MCF 10A (cell line): ENCODE measurements at regions of chr15 and their contacts with region 1.

Region 1: GRCh38 chr15:87267798-87268197 is 988.7 kb downstream of the NTRK3 start:
- DNase-seq: peak; percentile 69
- H3K4me3 Mint-ChIP-seq: no peak overlapping the region
- H3K27ac Mint-ChIP-seq: peak overlapping the region; percentile 74
- H3K4me1 Mint-ChIP-seq: peaks cover 22% of the 10 kb centered on the region
- H3K27me3 Mint-ChIP-seq: no peaks in the 10 kb centered on the region
- CTCF ChIP-seq: no peak

Region 2: DNA sequence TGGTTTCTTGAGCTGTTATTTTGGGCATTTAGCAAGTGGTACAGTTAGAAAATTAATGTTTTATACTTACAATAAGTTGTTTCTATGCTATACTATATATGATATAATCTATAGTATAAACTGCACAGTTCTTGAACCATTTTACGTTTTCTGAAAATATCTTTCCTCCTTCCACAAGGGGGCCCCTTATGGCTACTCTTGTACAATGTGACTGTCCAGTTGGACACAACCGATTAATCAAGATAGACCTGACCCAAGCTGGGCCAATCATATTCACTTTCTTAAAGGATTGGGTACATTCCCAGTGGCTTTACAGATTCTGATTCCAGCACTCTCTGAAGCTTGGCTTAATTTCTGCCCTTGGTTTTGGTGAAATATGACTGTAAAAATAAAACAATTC is 234.7 kb before region 1 on chr15:
- CTCF ChIA-PET with region 1: interaction called, 3 read pairs
- POLR2A ChIA-PET with region 1: no interaction called
- intact Hi-C with region 1: loop called (anchors 10 kb)
- DNase-seq: peak; percentile 12
- H3K4me3 Mint-ChIP-seq: no peak overlapping the region
- H3K27ac Mint-ChIP-seq: peak overlapping the region; percentile 64
- H3K4me1 Mint-ChIP-seq: peaks cover 20% of the 10 kb centered on the region
- H3K27me3 Mint-ChIP-seq: no peaks in the 10 kb centered on the region
- CTCF ChIP-seq: no peak

Region 3: DNA sequence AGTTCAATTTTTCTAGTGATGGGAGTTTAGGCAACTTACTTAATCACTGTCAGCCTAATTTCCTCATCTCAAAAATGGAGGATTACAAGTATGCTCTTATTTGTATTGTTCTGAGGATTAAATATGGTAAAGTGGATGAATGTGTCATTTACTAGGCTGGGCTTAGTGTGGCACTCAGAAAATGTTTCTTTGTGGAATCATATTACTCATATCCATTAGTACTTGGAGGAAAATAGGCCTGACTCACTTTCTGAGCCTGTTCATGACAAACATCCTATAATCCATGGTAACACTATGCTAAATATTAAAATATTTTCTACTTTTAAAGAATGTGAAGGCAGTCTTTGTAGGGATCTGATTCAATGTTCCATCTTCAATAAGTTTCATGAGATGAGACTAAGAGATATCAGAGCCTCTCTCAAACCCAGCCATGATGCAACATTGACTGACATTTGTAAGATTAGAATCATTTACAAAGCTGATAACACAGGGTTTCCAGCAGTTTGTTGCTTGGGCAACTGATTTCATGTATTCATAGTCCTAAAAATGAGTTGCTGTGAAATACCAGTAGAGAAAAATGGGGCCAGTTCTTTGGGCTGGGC is 59.8 kb before region 1 on chr15:
- CTCF ChIA-PET with region 1: no interaction called
- POLR2A ChIA-PET with region 1: no interaction called
- intact Hi-C with region 1: loop called (anchors 5 kb)
- DNase-seq: peak; percentile 18
- H3K4me3 Mint-ChIP-seq: no peak overlapping the region
- H3K27ac Mint-ChIP-seq: peak overlapping the region; percentile 19
- H3K4me1 Mint-ChIP-seq: peaks cover 14% of the 10 kb centered on the region
- H3K27me3 Mint-ChIP-seq: no peaks in the 10 kb centered on the region
- CTCF ChIP-seq: no peak

Region 4: GRCh38 chr15:87317900-87318299 is 50.1 kb after region 1 on chr15:
- CTCF ChIA-PET with region 1: no interaction called
- POLR2A ChIA-PET with region 1: no interaction called
- intact Hi-C with region 1: no loop called
- DNase-seq: no peak
- H3K4me3 Mint-ChIP-seq: no peak overlapping the region
- H3K27ac Mint-ChIP-seq: no peak overlapping the region
- H3K4me1 Mint-ChIP-seq: no peaks in the 10 kb centered on the region
- H3K27me3 Mint-ChIP-seq: no peaks in the 10 kb centered on the region
- CTCF ChIP-seq: no peak

Region 5: GRCh38 chr15:87369269-87369668 is 101.5 kb after region 1 on chr15:
- CTCF ChIA-PET with region 1: no interaction called
- POLR2A ChIA-PET with region 1: no interaction called
- intact Hi-C with region 1: loop called (anchors 5 kb)
- DNase-seq: peak; percentile 67
- H3K4me3 Mint-ChIP-seq: no peak overlapping the region
- H3K27ac Mint-ChIP-seq: peak overlapping the region; percentile 85
- H3K4me1 Mint-ChIP-seq: peaks cover 48% of the 10 kb centered on the region
- H3K27me3 Mint-ChIP-seq: no peaks in the 10 kb centered on the region
- CTCF ChIP-seq: no peak

Region 6: GRCh38 chr15:87498560-87498959 is 230.8 kb after region 1 on chr15:
- CTCF ChIA-PET with region 1: interaction called, 5 read pairs
- POLR2A ChIA-PET with region 1: no interaction called
- intact Hi-C with region 1: loop called (anchors 10 kb)
- DNase-seq: peak; percentile 38
- H3K4me3 Mint-ChIP-seq: no peak overlapping the region
- H3K27ac Mint-ChIP-seq: no peak overlapping the region
- H3K4me1 Mint-ChIP-seq: no peaks in the 10 kb centered on the region
- H3K27me3 Mint-ChIP-seq: no peaks in the 10 kb centered on the region
- CTCF ChIP-seq: no peak